ENCODE measurements at regions of chr22 and their contacts with region 1.

Region 1: GRCh38 chr22:24244101-24244787 is 638 bp downstream of the GGT5 start:
- DNase-seq: no peak
- H3K4me3 Mint-ChIP-seq: peak overlapping the region; percentile 1
- H3K27ac Mint-ChIP-seq: peak overlapping the region; percentile 17
- H3K4me1 Mint-ChIP-seq: peaks cover 34% of the 10 kb centered on the region
- H3K27me3 Mint-ChIP-seq: no peaks in the 10 kb centered on the region

Region 2: DNA sequence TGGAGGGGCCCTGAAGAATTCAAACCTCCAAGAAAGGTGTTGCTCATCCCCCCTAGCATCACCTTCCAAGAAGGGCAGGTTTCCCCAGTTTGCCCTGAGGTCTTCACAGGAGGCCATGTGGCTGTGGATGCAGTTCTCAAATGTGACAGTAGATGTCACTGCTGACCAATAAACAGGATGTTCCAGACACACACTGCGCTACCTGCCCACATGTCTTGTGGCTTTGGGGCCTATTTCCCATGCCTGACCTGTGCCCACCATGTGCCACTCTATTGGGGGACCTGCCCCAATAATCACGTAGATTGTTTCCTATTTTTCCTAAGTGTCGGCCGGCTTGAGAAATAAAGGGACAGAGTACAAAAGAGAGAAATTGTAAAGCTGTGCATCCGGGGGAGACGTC is 259.8 kb before region 1 on chr22:
- intact Hi-C with region 1: loop called (anchors 10 kb)
- DNase-seq: peak; percentile 90
- H3K4me3 Mint-ChIP-seq: no peak overlapping the region
- H3K27ac Mint-ChIP-seq: no peak overlapping the region
- H3K4me1 Mint-ChIP-seq: peaks cover 9% of the 10 kb centered on the region
- H3K27me3 Mint-ChIP-seq: peaks cover 2% of the 10 kb centered on the region

Region 3: GRCh38 chr22:24208012-24208749 is 36.1 kb before region 1 on chr22:
- intact Hi-C with region 1: loop called (anchors 5 kb)
- DNase-seq: no peak
- H3K4me3 Mint-ChIP-seq: peak overlapping the region; percentile 56
- H3K27ac Mint-ChIP-seq: peak overlapping the region; percentile 83
- H3K4me1 Mint-ChIP-seq: peaks cover 32% of the 10 kb centered on the region
- H3K27me3 Mint-ChIP-seq: no peaks in the 10 kb centered on the region

Region 4: DNA sequence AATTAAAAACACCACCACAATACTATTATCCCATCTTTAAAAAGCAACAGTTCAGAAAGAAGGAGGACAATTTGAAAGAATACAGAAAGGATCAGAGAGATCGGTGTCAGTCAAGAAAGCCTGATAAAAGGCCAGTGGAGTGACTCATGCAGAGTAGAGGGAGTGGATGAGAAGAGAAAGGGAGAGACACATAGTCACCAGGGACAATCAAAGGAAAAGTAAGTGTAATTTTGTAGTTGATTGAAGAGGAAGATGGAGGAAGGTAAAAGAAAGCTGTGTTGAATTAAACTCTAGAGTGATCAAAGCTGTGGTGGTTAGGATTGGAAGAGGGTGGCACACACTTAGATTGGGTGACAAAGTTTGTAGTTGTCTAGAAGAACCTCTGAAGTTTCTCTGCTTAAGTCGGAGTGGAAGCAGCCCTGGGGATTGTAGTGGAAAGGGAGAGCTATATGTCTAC is 40.5 kb after region 1 on chr22:
- intact Hi-C with region 1: loop called (anchors 1 kb)
- DNase-seq: peak; percentile 62
- H3K4me3 Mint-ChIP-seq: peak overlapping the region; percentile 47
- H3K27ac Mint-ChIP-seq: peak overlapping the region; percentile 86
- H3K4me1 Mint-ChIP-seq: peaks cover 37% of the 10 kb centered on the region
- H3K27me3 Mint-ChIP-seq: peaks cover 3% of the 10 kb centered on the region

Region 5: DNA sequence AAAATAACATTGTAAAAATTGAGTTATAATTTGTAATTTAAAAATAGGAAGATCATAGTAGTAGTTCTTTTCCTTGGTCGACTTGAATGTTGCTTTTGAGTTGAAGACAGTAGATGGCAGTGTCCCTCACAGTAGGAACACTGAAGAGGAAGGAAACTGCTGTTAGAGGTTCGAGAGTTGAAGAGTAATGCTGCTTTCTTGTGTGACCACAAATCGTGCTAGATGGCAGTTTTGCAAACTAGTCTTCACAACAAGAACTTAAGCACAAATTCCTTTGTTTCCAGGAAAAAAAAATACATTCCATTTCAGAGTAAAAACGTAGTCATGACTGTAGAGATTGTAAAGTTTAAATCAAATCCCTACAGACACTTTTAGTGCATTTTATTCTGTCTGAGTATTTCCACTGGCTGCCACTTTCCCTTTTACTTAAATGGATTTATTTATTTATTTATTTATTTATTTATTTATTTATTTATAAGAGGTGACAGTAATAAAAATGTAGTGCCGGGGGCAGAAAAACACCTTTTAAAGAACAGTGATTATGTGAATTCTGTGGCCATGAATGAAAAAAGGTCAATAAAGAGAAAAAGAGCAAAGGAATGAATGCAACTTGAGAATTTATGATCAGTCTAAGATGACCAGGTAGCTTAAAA is 81.0 kb after region 1 on chr22:
- intact Hi-C with region 1: no loop called
- DNase-seq: peak; percentile 83
- H3K4me3 Mint-ChIP-seq: peak overlapping the region; percentile 18
- H3K27ac Mint-ChIP-seq: peak overlapping the region; percentile 27
- H3K4me1 Mint-ChIP-seq: peaks cover 29% of the 10 kb centered on the region
- H3K27me3 Mint-ChIP-seq: no peaks in the 10 kb centered on the region

Measured in activated CD4-positive, alpha-beta T cell treated with anti-CD3 and anti-CD28 coated beads, Interleukin-2, amount 10 ng/mL, durations not matched to agents 24 days and 14 days (primary cell).